BJ (cell line): ENCODE measurements at regions of chr10 and their contacts with region 1.

Region 1: GRCh38 chr10:69800109-69800508 is 1.6 kb upstream of the COL13A1 start:
- DNase-seq: no peak
- H3K4me3 ChIP-seq: no peak overlapping the region
- H3K27me3 ChIP-seq: no peaks in the 10 kb centered on the region
- CTCF ChIP-seq: peak; percentile 86

Region 2: DNA sequence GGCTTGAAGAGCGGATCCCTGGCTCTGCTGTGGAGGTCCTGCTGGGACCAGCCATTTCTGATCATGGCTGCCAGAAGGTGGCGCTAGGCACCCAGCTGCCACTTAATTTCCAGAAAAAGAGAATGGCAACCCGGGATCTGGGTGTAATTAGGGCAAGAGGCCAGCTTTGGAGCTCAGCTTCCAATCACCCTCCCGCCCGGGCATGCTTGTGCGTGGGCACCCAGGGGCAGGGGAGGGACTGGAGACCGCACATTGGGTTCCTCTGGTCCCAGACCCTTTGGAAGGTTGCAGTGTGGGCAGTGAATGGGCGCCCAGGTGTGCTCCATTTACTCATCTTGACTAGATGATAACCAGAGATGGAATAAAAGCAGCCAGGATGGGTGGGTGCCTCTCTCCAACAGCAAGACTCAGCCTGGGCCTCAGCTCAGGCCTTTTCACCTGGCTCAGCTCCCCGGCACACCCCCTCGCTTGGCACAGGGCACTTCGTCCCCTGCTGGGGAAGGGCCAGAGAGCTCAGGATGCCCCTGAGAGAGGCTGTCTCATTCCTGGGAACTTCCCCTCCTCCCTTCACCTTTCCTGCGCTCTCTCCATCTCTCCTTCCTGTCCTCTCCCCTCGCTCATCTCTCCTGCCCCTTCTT is 155.3 kb before region 1 on chr10:
- CTCF ChIA-PET with region 1: interaction called, 17 read pairs
- POLR2A ChIA-PET with region 1: no interaction called
- DNase-seq: no peak
- H3K4me3 ChIP-seq: no peak overlapping the region
- H3K27me3 ChIP-seq: peaks cover 6% of the 10 kb centered on the region
- CTCF ChIP-seq: peak; percentile 81

Region 3: GRCh38 chr10:69728335-69728870 is 71.7 kb before region 1 on chr10:
- CTCF ChIA-PET with region 1: interaction called, 21 read pairs
- POLR2A ChIA-PET with region 1: no interaction called
- DNase-seq: no peak
- H3K4me3 ChIP-seq: no peak overlapping the region
- H3K27me3 ChIP-seq: peaks cover 7% of the 10 kb centered on the region
- CTCF ChIP-seq: no peak

Region 4: GRCh38 chr10:69769395-69769992 is 30.6 kb before region 1 on chr10:
- CTCF ChIA-PET with region 1: interaction called, 13 read pairs
- POLR2A ChIA-PET with region 1: no interaction called
- DNase-seq: peak; percentile 55
- H3K4me3 ChIP-seq: no peak overlapping the region
- H3K27me3 ChIP-seq: peaks cover 4% of the 10 kb centered on the region
- CTCF ChIP-seq: no peak

Region 5: DNA sequence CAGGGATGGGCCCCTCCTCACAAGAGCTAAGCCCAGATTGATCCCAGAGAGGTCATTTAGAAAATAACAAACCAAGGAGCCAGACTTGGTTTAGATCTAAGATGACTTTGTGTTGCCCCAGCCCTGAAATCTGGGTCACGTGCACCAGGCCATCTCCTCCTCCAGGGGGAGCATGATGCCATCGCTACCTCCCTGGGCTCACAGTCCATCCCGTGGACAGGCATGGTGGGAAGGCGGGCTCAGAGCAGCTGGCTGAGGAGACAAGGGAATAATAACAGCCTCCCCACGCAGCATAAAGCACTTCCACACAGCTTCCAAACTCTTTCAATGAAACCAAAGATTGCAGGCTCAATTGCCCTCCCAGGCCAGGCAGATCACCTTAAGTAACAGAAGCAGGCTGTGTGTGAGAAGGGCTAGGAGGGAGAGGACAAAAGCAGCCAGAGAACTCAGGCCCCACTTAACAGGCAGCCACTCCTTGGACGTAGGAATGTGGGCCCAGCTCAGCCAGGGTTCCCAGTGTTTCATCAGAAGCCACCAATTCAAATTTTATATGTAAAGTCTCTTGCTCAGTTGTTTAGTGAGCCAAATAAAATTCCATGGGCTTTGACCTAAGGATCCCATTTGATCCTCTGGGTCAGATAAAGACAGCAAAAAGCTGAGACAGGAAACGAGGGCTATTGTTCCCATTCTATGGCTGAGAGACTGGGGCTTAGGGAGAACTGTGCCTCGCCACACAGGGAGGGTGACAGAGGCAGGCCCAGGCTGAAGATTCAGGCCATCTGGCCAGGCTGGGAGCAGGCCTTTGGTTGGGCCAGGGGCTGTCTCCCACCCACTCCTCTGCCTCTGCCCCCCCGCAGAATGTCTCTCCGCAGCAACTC is 101.8 kb after region 1 on chr10:
- CTCF ChIA-PET with region 1: interaction called, 12 read pairs
- POLR2A ChIA-PET with region 1: no interaction called
- DNase-seq: no peak
- H3K4me3 ChIP-seq: no peak overlapping the region
- H3K27me3 ChIP-seq: no peaks in the 10 kb centered on the region
- CTCF ChIP-seq: peak; percentile 81